Activated CD8-positive, alpha-beta memory T cell treated with anti-CD3 and anti-CD28 coated beads, Interleukin-2, amount 10 ng/mL, durations not matched to agents 7 days and 5 days (primary cell): ENCODE measurements at regions of chr11 and their contacts with region 1.

Region 1: GRCh38 chr11:67613960-67614715 is 7.4 kb downstream of the NDUFV1 start:
- DNase-seq: peak; percentile 88
- ATAC-seq: peak; percentile 85
- H3K4me3 Mint-ChIP-seq: peak overlapping the region; percentile 65
- H3K27ac Mint-ChIP-seq: peak overlapping the region; percentile 94
- H3K4me1 Mint-ChIP-seq: peaks cover 37% of the 10 kb centered on the region
- H3K27me3 Mint-ChIP-seq: peaks cover 9% of the 10 kb centered on the region

Region 2: GRCh38 chr11:67439321-67439883 is 174.7 kb before region 1 on chr11:
- CTCF ChIA-PET with region 1: no interaction called
- DNase-seq: peak; percentile 59
- ATAC-seq: no peak
- H3K4me3 Mint-ChIP-seq: peak overlapping the region; percentile 95
- H3K27ac Mint-ChIP-seq: peak overlapping the region; percentile 93
- H3K4me1 Mint-ChIP-seq: peaks cover 54% of the 10 kb centered on the region
- H3K27me3 Mint-ChIP-seq: no peaks in the 10 kb centered on the region

Region 3: DNA sequence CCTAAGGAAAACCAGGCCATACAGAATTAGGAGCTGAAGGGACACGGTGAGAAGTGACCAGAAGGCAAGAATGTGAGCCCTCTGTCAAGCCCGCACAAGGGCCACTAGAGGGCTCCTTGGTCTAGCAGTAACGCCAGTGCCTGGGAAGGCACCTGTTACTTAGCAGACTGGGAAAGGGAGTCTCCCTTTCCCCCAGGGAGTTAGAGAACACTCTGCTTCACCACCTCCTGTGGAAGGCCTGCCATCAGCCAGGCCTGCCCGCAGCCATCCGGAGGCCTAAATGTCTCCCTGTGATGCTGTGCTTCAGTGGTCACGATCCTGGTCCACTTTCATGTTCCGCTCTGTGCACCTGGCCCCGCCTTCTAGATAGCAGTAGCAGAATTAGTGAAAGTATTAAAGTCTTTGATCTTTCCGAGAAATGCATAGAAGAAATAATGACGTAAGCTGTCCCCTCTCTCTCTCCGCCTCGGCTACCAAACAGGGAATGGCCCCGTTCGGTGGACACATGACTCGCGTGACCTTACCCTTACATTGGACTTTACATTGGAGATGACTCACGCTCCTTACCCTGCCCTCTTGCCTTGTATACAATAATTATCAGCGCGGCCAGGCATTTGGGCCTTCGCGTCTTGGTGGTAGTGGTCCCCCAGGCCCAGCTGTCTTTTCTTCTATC is 41.3 kb before region 1 on chr11:
- CTCF ChIA-PET with region 1: interaction called, 10 read pairs
- DNase-seq: peak; percentile 55
- ATAC-seq: no peak
- H3K4me3 Mint-ChIP-seq: no peak overlapping the region
- H3K27ac Mint-ChIP-seq: no peak overlapping the region
- H3K4me1 Mint-ChIP-seq: no peaks in the 10 kb centered on the region
- H3K27me3 Mint-ChIP-seq: peaks cover 33% of the 10 kb centered on the region

Region 4: GRCh38 chr11:67583247-67584204 is 30.6 kb before region 1 on chr11 and contains the start of gene GSTP1:
- CTCF ChIA-PET with region 1: interaction called, 20 read pairs
- DNase-seq: peak; percentile 87
- ATAC-seq: peak; percentile 95
- H3K4me3 Mint-ChIP-seq: peak within 1 kb of the TSS; percentile 88
- H3K27ac Mint-ChIP-seq: peak within 1 kb of the TSS; percentile 84
- H3K4me1 Mint-ChIP-seq: peaks cover 49% of the 10 kb centered on the region
- H3K27me3 Mint-ChIP-seq: peaks cover 31% of the 10 kb centered on the region
- total RNA-seq, gene GSTP1: 339 to 406 TPM

Region 5: DNA sequence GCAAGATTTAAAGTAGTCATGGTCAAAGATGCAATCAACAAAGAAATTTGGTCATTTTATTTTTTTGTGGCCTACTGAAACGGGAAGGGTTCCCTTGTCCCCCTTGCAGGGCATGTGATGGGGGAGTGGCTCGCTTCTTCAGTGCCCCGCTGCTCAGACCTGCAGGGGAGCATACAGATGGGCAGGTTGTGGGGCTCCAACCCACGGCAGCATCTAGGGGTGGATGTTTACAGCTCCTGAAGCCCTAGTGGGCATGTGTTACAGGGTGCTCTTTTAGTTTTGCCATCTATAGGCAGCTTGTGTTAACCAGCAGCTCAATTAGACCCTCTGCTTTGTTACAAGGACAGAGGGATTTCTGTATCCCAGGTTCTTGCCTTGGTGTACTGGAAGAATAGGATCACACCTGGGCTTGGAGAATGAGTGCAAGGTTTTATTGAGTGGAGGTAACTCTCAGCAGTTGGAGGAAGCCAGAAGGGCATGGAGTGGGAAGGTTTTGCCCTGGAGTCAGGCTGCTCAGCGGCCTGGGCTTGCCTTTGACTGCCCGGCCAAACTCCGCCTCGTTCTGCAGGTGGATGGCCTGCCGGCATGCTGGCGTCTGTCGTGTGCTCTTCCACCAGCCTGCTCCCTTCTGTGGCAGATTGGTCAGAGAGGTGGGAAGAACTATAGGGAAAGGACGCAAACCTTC is 21.1 kb before region 1 on chr11:
- CTCF ChIA-PET with region 1: interaction called, 26 read pairs
- DNase-seq: no peak
- ATAC-seq: no peak
- H3K4me3 Mint-ChIP-seq: no peak overlapping the region
- H3K27ac Mint-ChIP-seq: no peak overlapping the region
- H3K4me1 Mint-ChIP-seq: no peaks in the 10 kb centered on the region
- H3K27me3 Mint-ChIP-seq: peaks cover 4% of the 10 kb centered on the region

Region 6: GRCh38 chr11:67600324-67601029 is 13.7 kb before region 1 on chr11:
- CTCF ChIA-PET with region 1: interaction called, 26 read pairs
- DNase-seq: peak; percentile 63
- ATAC-seq: peak; percentile 61
- H3K4me3 Mint-ChIP-seq: no peak overlapping the region
- H3K27ac Mint-ChIP-seq: peak overlapping the region; percentile 65
- H3K4me1 Mint-ChIP-seq: peaks cover 21% of the 10 kb centered on the region
- H3K27me3 Mint-ChIP-seq: peaks cover 25% of the 10 kb centered on the region

Region 7: GRCh38 chr11:67648140-67649123 is 34.3 kb after region 1 on chr11:
- CTCF ChIA-PET with region 1: interaction called, 11 read pairs
- DNase-seq: peak; percentile 73
- ATAC-seq: peak; percentile 57
- H3K4me3 Mint-ChIP-seq: no peak overlapping the region
- H3K27ac Mint-ChIP-seq: peak overlapping the region; percentile 89
- H3K4me1 Mint-ChIP-seq: peaks cover 55% of the 10 kb centered on the region
- H3K27me3 Mint-ChIP-seq: no peaks in the 10 kb centered on the region

Region 8: GRCh38 chr11:67656278-67656922 is 42.3 kb after region 1 on chr11:
- CTCF ChIA-PET with region 1: interaction called, 12 read pairs
- DNase-seq: no peak
- ATAC-seq: no peak
- H3K4me3 Mint-ChIP-seq: no peak overlapping the region
- H3K27ac Mint-ChIP-seq: peak overlapping the region; percentile 68
- H3K4me1 Mint-ChIP-seq: peaks cover 18% of the 10 kb centered on the region
- H3K27me3 Mint-ChIP-seq: peaks cover 2% of the 10 kb centered on the region